Esophagus squamous epithelium (tissue), 5 donors: ENCODE measurements at regions of chr3 and their contacts with region 1.

Region 1: DNA sequence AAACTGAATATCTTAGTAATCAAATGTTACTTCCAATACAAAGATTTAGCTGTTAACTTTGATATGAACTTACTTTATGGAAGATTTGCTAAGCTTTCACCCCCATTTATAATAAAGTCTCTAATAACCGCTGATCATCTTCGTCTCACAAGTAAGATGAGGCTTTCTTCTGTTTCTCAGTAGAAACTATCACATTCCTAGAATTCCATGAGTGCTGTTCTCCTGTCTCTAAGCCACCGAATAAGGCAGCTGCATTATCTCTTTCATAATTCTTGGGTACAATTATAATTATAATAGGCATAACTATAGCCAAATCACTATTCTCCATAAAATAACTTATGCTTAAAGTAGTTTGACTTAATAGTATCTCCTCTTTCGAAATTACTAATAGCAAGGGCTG is 18.3 kb upstream of the SETMAR start:
- DNase-seq: no peak
- H3K4me3 ChIP-seq: no peak overlapping the region
- H3K27ac ChIP-seq: no peak overlapping the region
- H3K4me1 ChIP-seq: no peaks in the 10 kb centered on the region
- H3K27me3 ChIP-seq: no peaks in the 10 kb centered on the region
- CTCF ChIP-seq: no peak
- POLR2A ChIP-seq: no peak

Region 2: GRCh38 chr3:3200632-3201212 is 1084.1 kb before region 1 on chr3:
- intact Hi-C with region 1: loop called (anchors 10 kb)
- DNase-seq: no peak
- H3K4me3 ChIP-seq: no peak overlapping the region
- H3K27ac ChIP-seq: no peak overlapping the region
- H3K4me1 ChIP-seq: no peaks in the 10 kb centered on the region
- H3K27me3 ChIP-seq: no peaks in the 10 kb centered on the region
- CTCF ChIP-seq: peak; percentile 34 to 82 (median 64)
- POLR2A ChIP-seq: no peak

Region 3: DNA sequence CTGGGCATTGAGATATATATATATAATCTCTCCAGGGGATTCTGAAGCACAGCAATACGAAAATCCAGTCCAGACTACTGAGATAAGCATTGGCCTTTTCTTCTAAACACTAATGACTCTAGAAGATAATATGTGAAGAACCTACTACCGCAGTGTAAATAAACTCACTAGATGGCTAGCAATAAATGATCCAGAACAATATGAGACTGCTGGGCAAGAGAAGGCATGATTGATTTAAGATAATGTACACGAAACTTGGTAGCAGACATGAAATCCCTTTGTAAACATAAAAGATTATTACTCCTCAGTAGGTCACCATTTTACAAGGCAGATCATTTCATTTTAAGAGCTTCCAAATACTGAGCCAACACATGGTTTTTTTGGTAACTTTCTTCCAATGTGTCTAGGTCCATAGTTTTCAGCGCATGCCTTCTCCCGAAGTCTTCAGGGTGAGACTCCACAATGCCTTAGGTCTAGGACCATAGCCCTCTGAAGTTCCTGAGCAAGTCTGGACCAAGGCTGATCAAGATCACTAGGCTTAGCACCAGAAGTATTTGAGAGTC is 292.5 kb before region 1 on chr3:
- intact Hi-C with region 1: no loop called
- DNase-seq: no peak
- H3K4me3 ChIP-seq: no peak overlapping the region
- H3K27ac ChIP-seq: no peak overlapping the region
- H3K4me1 ChIP-seq: no peaks in the 10 kb centered on the region
- H3K27me3 ChIP-seq: no peaks in the 10 kb centered on the region
- CTCF ChIP-seq: no peak
- POLR2A ChIP-seq: no peak

Region 4: GRCh38 chr3:4571690-4572334 is 286.9 kb after region 1 on chr3:
- intact Hi-C with region 1: no loop called
- DNase-seq: no peak
- H3K4me3 ChIP-seq: no peak overlapping the region
- H3K27ac ChIP-seq: no peak overlapping the region
- H3K4me1 ChIP-seq: peaks cover 0 to 20% (median 3%) of the 10 kb centered on the region in 3 donors
- H3K27me3 ChIP-seq: no peaks in the 10 kb centered on the region
- CTCF ChIP-seq: no peak
- POLR2A ChIP-seq: no peak